PC-9 (cell line): ENCODE measurements at regions of chr7 and their contacts with region 1.

Region 1: GRCh38 chr7:34133983-34134782 is 228.8 kb downstream of the BMPER start:
- DNase-seq: peak in 1 of 2 experiments; percentile 47
- H3K4me3 ChIP-seq: no peak overlapping the region
- H3K27ac ChIP-seq: no peak overlapping the region
- H3K4me1 ChIP-seq: no peaks in the 10 kb centered on the region
- H3K27me3 ChIP-seq: no peaks in the 10 kb centered on the region; the same call in 1 of the 2 replicates
- CTCF ChIP-seq: peak; percentile 82

Region 2: GRCh38 chr7:34430458-34430857 is 296.3 kb after region 1 on chr7:
- CTCF ChIA-PET with region 1: no interaction called
- POLR2A ChIA-PET with region 1: no interaction called
- intact Hi-C with region 1: loop called (anchors 1 kb)
- DNase-seq: peak in 1 of 2 experiments; percentile 24
- H3K4me3 ChIP-seq: no peak overlapping the region
- H3K27ac ChIP-seq: no peak overlapping the region
- H3K4me1 ChIP-seq: no peaks in the 10 kb centered on the region
- H3K27me3 ChIP-seq: peaks cover 4% of the 10 kb centered on the region; the same call in 1 of the 2 replicates
- CTCF ChIP-seq: peak; percentile 71